Activated T-helper 1 cell treated with anti-CD3 and anti-CD28 coated beads, Interleukin-12 subunit alpha, Interleukin-12 subunit beta, Interleukin-2, Interleukin-4 antibody, amounts not matched to agents 30 ng/mL and 10 ng/mL and 1 ng/mL, durations not matched to agents 14 hours and 24 hours and 36 hours (primary cell): ENCODE measurements at regions of chr5 and their contacts with region 1.

Region 1: GRCh38 chr5:141923448-141924352 is at the start of gene DELE1:
- DNase-seq: peak; percentile 88
- H3K4me3 Mint-ChIP-seq: peak within 1 kb of the TSS; percentile 92
- H3K27ac Mint-ChIP-seq: peak within 1 kb of the TSS; percentile 96
- H3K4me1 Mint-ChIP-seq: peaks cover 32% of the 10 kb centered on the region
- H3K27me3 Mint-ChIP-seq: no peaks in the 10 kb centered on the region
- total RNA-seq, gene DELE1: 68.4 and 81.5 TPM in 2 replicates

Region 2: DNA sequence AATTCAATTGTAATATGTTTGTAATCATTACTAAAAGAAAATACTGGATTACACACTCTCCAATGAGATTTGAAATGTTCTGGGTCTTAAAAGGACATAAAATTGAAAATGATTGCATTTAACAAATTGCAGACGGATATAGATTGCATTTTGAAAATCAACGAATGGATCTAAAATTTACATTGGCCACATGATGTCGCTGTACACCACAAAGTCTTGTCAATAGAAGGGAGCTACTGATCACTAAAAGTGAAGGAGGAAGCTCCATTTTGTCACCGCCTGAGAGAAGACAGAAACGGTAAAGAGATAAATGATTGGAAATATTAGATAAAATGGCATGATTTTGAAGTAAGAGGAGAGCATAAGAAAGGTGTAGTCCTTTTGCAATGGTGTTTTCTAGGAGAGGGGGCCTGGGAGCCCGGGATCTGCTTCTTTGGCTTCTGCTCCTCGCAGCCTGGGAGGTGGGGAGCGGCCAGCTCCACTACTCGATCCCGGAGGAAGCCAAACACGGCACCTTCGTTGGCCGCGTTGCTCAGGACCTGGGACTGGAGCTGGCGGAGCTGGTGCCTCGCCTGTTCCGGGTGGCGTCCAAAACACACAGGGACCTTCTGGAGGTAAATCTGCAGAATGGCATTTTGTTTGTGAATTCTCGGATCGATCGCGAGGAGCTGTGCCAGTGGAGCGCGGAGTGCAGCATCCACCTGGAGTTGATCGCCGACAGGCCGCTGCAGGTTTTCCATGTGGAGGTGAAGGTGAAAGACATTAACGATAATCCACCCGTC is 1137.6 kb before region 1 on chr5 and contains the start of gene PCDHA1:
- intact Hi-C with region 1: no loop called
- DNase-seq: no peak
- H3K4me3 Mint-ChIP-seq: no peak within 1 kb of the TSS
- H3K27ac Mint-ChIP-seq: no peak within 1 kb of the TSS
- H3K4me1 Mint-ChIP-seq: no peaks in the 10 kb centered on the region
- H3K27me3 Mint-ChIP-seq: no peaks in the 10 kb centered on the region
- total RNA-seq, gene PCDHA1: not detected in 2 replicates

Region 3: DNA sequence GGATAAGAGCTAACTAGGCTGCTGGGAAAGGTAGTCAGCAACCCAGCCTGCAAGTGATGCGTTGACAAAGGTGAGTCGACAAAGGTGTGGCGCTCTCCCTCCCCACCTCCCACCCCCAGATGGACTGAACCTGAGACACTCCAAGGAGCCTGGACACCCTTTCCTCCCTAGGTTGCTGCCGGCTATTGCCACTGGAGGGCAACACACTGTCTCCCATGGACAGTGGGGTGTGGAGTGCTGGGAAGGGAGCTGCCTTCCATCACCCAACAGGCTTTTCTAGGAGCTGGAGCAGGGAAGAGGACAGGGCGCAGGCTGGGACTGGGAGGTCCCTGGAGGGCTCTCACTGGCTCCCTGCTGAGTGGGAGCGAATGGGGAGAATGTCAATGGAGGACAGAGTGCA is 166.3 kb before region 1 on chr5:
- intact Hi-C with region 1: no loop called
- DNase-seq: no peak
- H3K4me3 Mint-ChIP-seq: no peak overlapping the region
- H3K27ac Mint-ChIP-seq: no peak overlapping the region
- H3K4me1 Mint-ChIP-seq: no peaks in the 10 kb centered on the region
- H3K27me3 Mint-ChIP-seq: peaks cover 41% of the 10 kb centered on the region

Region 4: DNA sequence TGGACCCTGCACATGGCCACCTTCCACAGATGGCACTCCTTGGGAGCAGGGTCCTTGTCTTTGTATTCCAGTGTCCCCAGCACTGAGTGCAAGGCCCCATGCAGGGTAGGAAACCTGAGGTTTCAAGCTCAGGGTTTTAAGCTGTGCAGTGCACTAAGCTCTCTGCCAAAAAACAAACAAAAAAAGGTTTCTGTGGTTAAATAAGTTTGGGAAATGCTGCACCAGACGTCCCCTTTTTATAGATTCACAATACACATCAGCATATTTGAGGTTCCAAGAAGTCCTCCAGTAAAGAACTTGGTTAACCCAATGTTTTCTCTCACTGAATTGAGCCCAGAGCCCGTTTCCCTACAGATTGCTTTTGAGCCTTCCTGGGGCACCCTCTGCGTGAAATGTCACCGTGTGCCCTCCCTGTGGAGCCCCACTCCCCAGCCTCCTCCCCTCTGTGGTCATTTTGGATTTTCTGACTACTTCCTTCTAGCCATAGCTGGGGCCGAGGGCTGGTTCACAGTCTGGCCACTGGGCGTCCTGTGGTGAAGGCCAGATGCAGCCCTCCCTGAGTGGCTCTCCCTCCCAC is 17.1 kb after region 1 on chr5:
- intact Hi-C with region 1: no loop called
- DNase-seq: no peak
- H3K4me3 Mint-ChIP-seq: no peak overlapping the region
- H3K27ac Mint-ChIP-seq: no peak overlapping the region
- H3K4me1 Mint-ChIP-seq: peaks cover 11% of the 10 kb centered on the region
- H3K27me3 Mint-ChIP-seq: no peaks in the 10 kb centered on the region

Region 5: DNA sequence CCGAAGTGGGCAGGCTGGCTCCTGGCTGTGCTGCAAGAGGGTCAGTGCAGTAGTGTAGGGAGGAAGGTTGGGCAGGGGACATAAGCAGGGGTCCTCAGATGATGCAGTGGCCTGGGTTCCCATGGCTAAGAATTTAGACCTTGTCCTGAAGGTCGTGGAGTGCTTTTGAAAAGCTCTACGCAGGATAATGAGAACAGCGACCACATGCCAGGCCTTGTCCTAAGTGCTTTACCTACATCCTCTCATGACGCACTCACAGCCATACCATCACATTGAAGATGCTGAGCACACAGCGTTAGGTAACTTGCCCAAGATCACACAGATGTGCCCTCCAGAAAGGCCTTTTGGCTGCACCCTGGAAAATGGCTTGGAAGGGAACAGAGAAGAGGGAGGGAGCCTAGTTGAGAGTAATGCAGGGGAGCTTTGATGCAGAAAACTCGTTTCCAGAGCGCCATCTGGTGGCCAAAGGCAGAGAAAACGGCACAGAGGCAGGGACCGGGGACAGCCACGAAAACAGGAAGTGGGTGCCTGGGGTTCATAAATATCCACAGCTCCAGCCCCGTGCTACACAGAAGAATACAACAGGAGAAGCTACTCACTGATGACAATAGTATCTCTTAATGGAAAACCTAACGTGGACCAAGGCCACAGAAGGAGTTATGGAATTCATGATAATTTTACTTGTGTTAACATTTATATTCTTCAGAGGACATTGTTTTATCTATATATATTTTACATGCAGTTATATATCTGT is 36.9 kb after region 1 on chr5:
- intact Hi-C with region 1: loop called (anchors 1 kb)
- DNase-seq: peak; percentile 82
- H3K4me3 Mint-ChIP-seq: peak overlapping the region; percentile 24
- H3K27ac Mint-ChIP-seq: peak overlapping the region; percentile 76
- H3K4me1 Mint-ChIP-seq: peaks cover 42% of the 10 kb centered on the region
- H3K27me3 Mint-ChIP-seq: no peaks in the 10 kb centered on the region

Region 6: GRCh38 chr5:141968914-141969608 is 45.4 kb after region 1 on chr5 and contains the start of gene RNF14:
- intact Hi-C with region 1: loop called (anchors 1 kb)
- DNase-seq: peak; percentile 95
- H3K4me3 Mint-ChIP-seq: peak within 1 kb of the TSS; percentile 92
- H3K27ac Mint-ChIP-seq: peak within 1 kb of the TSS; percentile 93
- H3K4me1 Mint-ChIP-seq: peaks cover 26% of the 10 kb centered on the region
- H3K27me3 Mint-ChIP-seq: no peaks in the 10 kb centered on the region
- total RNA-seq, gene RNF14: 26.4 and 28.7 TPM in 2 replicates